Heart right ventricle (tissue), 16 donors: ENCODE measurements at regions of chr1 and their contacts with region 1.

Region 1: GRCh38 chr1:79797487-79797886 is 791.0 kb upstream of the ADGRL4 start:
- DNase-seq: no peak
- ATAC-seq: no peak
- H3K4me3 ChIP-seq: no peak overlapping the region
- H3K27ac ChIP-seq: no peak overlapping the region
- H3K4me1 ChIP-seq: no peaks in the 10 kb centered on the region
- H3K27me3 ChIP-seq: no peaks in the 10 kb centered on the region
- CTCF ChIP-seq: no peak

Region 2: DNA sequence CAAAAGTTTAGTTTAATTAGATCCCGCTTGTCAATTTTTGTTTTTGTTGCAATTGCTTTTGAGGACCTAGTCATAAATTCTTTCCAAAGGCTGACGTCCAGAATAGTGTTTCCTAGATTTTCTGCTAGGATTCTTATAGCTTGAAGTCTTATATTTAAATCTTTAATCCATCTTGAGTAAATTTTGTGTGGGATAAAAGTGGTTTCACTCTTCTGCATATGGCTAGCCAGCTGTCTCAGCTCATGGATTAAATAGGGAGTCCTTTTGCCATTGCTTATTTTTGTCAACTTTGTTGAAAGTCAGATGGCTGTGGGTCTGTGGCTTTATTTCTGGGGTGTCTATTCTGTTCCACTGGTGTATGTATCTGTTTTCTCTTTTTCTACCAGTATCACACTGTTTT is 10.3 kb after region 1 on chr1:
- intact Hi-C with region 1: loop called in 1 of 10 experiments (anchors 1 kb)
- DNase-seq: no peak
- ATAC-seq: no peak
- H3K4me3 ChIP-seq: no peak overlapping the region
- H3K27ac ChIP-seq: no peak overlapping the region
- H3K4me1 ChIP-seq: no peaks in the 10 kb centered on the region
- H3K27me3 ChIP-seq: no peaks in the 10 kb centered on the region
- CTCF ChIP-seq: no peak